HCT116 (cell line): ENCODE measurements at regions of chr17 and their contacts with region 1.

Region 1: DNA sequence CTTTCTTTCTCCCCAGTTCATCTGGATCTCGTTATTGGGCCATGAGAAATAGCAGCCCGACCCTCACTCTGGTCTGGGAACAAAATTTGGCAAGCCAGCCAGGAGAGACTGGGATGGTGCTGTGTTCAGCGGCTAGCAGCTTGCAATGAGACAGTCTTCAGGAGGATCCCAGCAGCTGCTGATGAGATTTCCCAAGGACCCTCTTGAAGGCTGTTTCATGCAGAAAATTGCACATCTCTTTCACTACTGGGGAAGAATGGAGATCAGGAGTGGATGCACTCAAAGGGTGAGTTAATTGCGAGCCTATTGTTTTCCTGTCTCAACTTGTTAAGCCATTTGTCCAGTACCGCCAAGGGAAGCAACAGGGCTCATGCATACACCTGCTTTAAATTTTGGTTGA is 5.5 kb upstream of the COIL start:
- DNase-seq: no peak
- ATAC-seq: no peak
- H3K4me3 ChIP-seq: no peak overlapping the region
- H3K27ac ChIP-seq: no peak overlapping the region
- H3K4me1 ChIP-seq: peaks cover 0 to 4% of the 10 kb centered on the region in 2 experiments; a peak in 2 of 4 replicates
- H3K27me3 ChIP-seq: no peaks in the 10 kb centered on the region
- CTCF ChIP-seq: no peak
- POLR2A ChIP-seq: no peak
- RAD21 ChIP-seq: no peak

Region 2: GRCh38 chr17:56521104-56521777 is 445.1 kb before region 1 on chr17:
- CTCF ChIA-PET with region 1: no interaction called
- POLR2A ChIA-PET with region 1: no interaction called
- RAD21 ChIA-PET with region 1: no interaction called
- intact Hi-C with region 1: no loop called
- DNase-seq: no peak
- ATAC-seq: no peak
- H3K4me3 ChIP-seq: no peak overlapping the region
- H3K27ac ChIP-seq: no peak overlapping the region
- H3K4me1 ChIP-seq: no peaks in the 10 kb centered on the region
- H3K27me3 ChIP-seq: peaks cover 50% of the 10 kb centered on the region
- CTCF ChIP-seq: no peak
- POLR2A ChIP-seq: no peak
- RAD21 ChIP-seq: no peak

Region 3: DNA sequence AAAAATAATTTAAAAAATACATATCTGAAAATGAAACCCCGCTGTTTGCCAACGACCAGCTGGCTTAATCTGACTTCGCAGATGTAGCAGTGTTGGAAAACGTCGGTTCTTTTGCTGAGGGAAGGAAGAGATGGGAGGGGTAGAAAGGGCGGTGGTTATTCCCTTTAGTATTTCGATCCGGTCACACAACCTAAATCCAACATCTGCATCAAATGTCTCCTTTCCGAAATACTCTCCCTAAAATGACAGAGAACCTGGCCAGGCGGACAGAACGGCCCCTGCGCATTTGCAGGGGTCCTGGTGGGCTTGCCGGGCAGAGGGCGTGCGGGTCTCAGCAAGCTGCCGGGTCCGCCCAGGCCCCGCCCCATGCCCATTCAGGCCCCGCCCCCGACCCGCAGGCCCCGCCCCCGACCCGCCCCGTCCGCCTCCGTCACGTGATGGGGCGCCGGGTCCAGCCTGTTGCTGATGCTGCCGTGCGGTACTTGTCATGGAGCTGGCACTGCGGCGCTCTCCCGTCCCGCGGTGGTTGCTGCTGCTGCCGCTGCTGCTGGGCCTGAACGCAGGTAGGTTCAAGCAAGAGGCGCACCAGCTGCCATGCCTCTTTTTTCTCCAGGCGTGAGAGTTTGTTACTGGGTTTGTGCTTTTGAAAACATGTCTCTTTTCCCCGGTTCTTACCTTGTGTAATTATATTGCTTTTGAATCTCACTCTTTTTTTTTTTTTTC is 11.5 kb after region 1 on chr17 and contains the start of gene SCPEP1:
- CTCF ChIA-PET with region 1: interaction called, 3 read pairs
- POLR2A ChIA-PET with region 1: interaction called, 11 read pairs
- RAD21 ChIA-PET with region 1: no interaction called
- intact Hi-C with region 1: no loop called
- DNase-seq: peak; percentile 60
- ATAC-seq: peak; percentile 94
- H3K4me3 ChIP-seq: peak within 1 kb of the TSS; percentile 60 to 74
- H3K27ac ChIP-seq: no peak within 1 kb of the TSS
- H3K4me1 ChIP-seq: peaks cover 8 to 14% of the 10 kb centered on the region in 2 experiments; a peak in 3 of 4 replicates
- H3K27me3 ChIP-seq: no peaks in the 10 kb centered on the region
- CTCF ChIP-seq: no peak
- POLR2A ChIP-seq: peak; percentile 58
- RAD21 ChIP-seq: no peak
- total RNA-seq, gene SCPEP1: 28.3 TPM

Region 4: DNA sequence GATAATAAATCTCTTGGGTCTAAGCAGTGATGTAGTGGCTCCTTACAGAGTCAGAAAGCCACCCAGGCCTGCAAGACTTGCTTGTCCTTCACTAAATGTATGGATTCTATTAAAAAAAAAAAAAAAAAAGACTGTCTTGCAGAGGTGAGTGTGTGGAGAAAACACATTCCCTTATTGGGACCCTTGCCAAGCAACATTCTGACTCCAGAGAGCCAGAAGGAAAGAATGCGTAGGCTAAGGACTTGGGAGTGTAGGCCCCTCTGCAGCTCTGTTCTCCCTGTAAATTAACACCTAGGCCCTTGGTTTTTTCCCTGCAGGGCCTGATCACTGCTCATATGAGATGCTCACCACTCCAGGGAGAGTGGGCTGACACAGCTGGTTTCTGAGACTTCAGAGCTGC is 29.4 kb after region 1 on chr17:
- CTCF ChIA-PET with region 1: no interaction called
- POLR2A ChIA-PET with region 1: no interaction called
- RAD21 ChIA-PET with region 1: no interaction called
- intact Hi-C with region 1: loop called (anchors 1 kb)
- DNase-seq: no peak
- ATAC-seq: no peak
- H3K4me3 ChIP-seq: no peak overlapping the region
- H3K27ac ChIP-seq: no peak overlapping the region
- H3K4me1 ChIP-seq: 0 out of 4 replicates have a peak, but pooled peaks cover 0 to 3% of the 10 kb centered on the region in 2 experiments
- H3K27me3 ChIP-seq: no peaks in the 10 kb centered on the region
- CTCF ChIP-seq: no peak
- POLR2A ChIP-seq: no peak
- RAD21 ChIP-seq: no peak